Activated T-helper 1 cell treated with anti-CD3 and anti-CD28 coated beads, Interleukin-12 subunit alpha, Interleukin-12 subunit beta, Interleukin-2, Interleukin-4 antibody, amounts not matched to agents 30 ng/mL and 10 ng/mL and 1 ng/mL, durations not matched to agents 14 hours and 24 hours and 36 hours (primary cell): ENCODE measurements at regions of chr17 and their contacts with region 1.

Region 1: DNA sequence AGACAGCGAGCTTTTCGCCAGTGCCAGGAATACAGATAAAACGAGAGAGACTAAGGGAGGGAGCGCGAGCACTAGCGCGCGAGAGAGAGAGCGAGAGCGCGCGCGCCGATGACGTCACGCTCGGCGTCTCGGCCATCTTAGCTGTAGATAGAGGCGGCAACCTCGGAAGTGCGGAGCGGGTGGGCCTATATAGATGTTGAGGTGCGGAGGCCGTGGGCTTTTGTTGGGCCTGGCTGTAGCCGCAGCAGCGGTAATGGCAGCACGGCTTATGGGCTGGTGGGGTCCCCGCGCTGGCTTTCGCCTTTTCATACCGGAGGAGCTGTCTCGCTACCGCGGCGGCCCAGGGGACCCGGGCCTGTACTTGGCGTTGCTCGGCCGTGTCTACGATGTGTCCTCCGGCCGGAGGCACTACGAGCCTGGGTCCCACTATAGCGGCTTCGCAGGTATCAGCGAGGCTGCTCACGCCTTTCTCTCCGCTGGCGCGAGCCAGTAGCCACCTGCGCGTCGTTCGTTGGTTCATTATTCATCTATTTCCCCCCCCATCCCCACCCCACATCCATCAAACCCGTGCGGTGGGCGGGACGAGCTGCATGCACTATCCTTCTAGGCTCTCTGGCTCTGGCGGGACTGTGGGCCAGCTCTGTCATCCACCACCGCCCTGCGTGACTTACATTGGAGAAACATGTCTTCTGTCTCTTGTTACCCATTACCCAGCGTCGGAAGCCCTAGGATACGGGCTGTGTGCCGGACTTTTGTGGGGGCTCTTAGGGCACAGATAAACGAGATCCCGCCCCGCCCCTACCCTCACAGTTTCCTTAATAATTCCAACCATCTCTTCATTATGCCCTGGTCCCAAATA is 795 bp downstream of the CYB5D2 start:
- DNase-seq: peak; percentile 86
- H3K4me3 Mint-ChIP-seq: peak overlapping the region; percentile 98
- H3K27ac Mint-ChIP-seq: peak overlapping the region; percentile 99
- H3K4me1 Mint-ChIP-seq: peaks cover 39% of the 10 kb centered on the region
- H3K27me3 Mint-ChIP-seq: no peaks in the 10 kb centered on the region

Region 2: DNA sequence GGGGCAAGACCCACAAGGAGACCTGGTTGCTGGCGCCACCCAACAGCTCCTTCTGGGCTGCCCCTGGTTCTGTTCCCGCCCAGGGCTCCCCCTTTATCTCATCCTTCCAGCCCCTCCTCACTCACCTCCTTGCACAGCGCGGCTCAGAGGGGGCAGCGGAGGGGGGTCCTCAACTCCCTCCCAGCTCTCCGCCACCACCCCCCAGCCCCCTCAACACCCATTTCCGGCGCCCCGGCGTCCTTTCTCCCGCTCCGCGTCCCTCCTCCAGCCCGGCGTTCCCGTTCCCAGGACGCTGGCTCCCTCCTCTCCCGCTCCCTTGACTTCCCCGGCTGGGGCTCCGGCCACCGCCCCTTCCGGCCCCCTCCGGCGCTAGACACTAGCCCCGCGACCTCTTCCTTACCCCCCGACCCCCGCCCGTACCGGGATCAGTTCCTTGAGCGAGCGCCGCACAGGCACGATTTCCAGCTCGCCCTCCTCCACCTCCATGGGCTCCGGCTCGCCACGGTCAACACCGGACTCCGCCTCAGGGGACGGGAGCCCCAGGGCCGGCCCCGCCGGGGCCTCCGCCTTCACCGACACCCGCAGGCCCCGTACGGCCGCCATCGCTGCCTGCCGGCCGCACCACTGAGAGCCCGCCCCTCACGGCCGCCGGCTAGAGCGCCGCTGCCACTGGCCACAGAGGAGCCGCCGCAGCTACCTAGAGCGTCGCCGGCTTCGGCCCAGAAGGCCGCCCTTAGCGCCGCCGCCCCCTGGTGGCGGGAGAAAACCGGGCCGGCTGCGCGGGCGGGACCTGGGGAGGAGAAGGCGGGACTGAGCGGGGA is 298.0 kb before region 1 on chr17 and contains the start of gene NCBP3:
- intact Hi-C with region 1: loop called (anchors 1 kb)
- DNase-seq: peak; percentile 90
- H3K4me3 Mint-ChIP-seq: peak within 1 kb of the TSS; percentile 97
- H3K27ac Mint-ChIP-seq: peak within 1 kb of the TSS; percentile 97
- H3K4me1 Mint-ChIP-seq: peaks cover 16% of the 10 kb centered on the region
- H3K27me3 Mint-ChIP-seq: peaks cover 9% of the 10 kb centered on the region
- total RNA-seq, gene NCBP3: 54.2 and 56.0 TPM in 2 replicates

Region 3: DNA sequence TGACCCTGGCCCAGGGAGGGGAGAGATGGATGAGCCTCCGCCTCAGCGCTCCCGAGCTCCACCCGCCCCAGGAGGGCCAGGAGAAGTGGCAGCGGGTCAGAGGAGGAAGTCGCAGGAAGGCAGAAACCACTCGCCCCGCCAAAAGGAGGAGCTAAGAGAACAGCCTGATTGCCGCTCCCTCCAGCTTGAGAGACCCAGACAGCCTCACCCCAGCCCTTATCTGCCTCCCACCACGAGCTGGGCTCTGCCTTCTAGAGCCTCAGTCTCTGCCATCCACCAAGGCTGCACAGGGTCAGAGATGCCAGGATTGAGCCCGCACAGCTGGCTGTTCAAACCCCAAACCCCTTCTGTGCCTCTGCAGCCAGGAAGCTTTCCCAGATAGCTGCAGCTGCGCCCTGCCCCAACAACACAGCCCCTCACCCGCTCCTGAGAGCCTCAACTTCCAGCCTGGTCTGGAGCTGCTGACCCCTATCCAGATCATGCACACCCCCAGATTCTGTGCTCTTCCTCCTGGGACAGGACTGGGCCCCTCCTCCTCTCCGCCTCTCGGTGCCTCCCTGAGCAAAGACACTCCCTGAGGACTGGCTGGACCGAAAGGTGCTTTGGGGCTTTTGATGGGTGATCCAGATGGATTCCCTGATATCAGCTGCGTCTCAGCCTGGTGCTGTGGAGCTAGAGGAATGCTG is 178.5 kb before region 1 on chr17:
- intact Hi-C with region 1: loop called (anchors 2 kb)
- DNase-seq: peak; percentile 66
- H3K4me3 Mint-ChIP-seq: peak overlapping the region; percentile 88
- H3K27ac Mint-ChIP-seq: peak overlapping the region; percentile 90
- H3K4me1 Mint-ChIP-seq: peaks cover 38% of the 10 kb centered on the region
- H3K27me3 Mint-ChIP-seq: no peaks in the 10 kb centered on the region

Region 4: GRCh38 chr17:4130715-4131114 is 13.1 kb before region 1 on chr17:
- intact Hi-C with region 1: no loop called
- DNase-seq: no peak
- H3K4me3 Mint-ChIP-seq: no peak overlapping the region
- H3K27ac Mint-ChIP-seq: peak overlapping the region; percentile 40
- H3K4me1 Mint-ChIP-seq: peaks cover 19% of the 10 kb centered on the region
- H3K27me3 Mint-ChIP-seq: no peaks in the 10 kb centered on the region

Region 5: DNA sequence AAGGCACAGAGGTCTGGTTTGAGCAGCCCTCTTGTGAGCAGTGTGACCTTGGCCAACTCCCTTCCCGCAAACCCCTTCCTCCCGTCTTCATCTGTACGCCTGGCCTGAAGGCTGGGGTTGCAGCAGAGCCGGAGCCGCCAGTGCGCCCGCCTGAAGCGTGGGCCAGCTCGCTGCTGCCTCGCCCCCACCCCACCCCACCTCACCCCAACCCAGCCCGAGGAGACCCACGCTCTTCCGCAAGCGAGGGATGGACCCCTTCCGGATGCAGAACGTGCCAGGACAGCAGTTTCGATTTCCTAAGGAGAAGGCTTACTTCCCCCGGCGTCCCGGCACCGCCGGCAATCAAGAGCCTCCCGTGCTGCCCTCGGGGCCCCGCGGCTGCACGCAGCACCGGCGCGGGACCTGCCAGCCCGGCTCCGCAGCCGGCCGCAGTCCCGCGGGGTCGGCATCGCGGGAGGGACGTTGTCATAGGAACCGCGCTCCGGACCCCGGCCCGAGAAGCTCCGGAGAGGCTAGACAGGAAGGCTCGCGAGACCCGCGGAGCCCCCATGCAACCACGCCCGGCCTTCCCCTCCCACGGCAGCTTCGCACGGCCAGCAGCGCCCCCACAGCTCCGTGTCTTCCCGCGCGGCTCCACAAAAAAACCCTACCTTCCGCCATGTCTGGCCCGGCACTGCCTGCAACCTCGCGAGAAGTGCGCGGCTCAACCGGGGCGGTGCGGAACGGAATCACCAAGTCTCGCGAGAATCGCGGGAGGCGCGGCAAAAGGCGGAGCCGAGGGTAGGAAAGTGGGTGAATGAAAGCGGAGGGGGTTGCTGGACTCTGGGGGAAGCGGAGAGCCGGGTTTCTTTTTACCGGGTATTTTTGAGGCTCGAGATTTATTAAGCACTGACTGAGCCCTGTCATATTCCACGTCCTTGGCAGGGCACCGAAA is 119.8 kb after region 1 on chr17 and contains the start of gene ANKFY1:
- intact Hi-C with region 1: loop called (anchors 1 kb)
- DNase-seq: peak; percentile 98
- H3K4me3 Mint-ChIP-seq: peak within 1 kb of the TSS; percentile 98
- H3K27ac Mint-ChIP-seq: peak within 1 kb of the TSS; percentile 95
- H3K4me1 Mint-ChIP-seq: peaks cover 37% of the 10 kb centered on the region
- H3K27me3 Mint-ChIP-seq: no peaks in the 10 kb centered on the region
- total RNA-seq, gene ANKFY1: 53.8 and 60.1 TPM in 2 replicates

Region 6: DNA sequence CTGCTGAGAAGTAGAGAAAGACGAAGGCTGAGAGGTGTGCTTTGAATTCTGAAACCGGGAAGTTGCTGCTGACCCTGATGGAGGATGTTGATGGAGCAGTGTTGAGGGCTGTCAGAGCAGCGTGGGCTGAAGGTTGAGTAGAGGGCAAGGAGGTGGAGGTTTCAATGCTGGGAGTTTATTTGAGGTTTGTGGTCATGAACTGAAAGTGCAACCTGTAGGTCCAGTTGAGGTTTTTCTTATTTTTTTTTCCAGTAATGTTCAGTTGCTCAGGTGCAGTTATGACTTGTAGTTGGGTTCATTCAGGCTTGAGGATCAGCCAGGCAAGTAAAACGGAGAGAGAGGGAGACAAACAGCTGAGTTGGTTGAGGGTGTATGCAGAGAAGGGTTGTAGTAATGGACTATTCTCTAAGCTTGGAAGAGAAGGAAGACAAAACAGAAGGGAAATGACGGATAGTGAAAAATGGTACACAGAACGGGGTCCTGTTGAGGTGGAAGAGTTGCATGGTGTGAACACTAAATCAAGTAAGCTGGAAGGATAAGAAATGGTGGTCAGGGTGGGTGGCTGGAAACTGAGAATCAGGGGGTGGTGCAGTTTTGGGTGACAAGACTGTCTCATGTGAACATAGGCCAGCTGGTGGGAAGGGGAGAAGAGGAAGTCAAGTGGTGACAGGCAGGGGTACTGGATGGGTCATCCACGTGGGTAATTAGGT is 231.4 kb after region 1 on chr17:
- intact Hi-C with region 1: loop called (anchors 1 kb)
- DNase-seq: peak; percentile 60
- H3K4me3 Mint-ChIP-seq: peak overlapping the region; percentile 60
- H3K27ac Mint-ChIP-seq: peak overlapping the region; percentile 89
- H3K4me1 Mint-ChIP-seq: peaks cover 32% of the 10 kb centered on the region
- H3K27me3 Mint-ChIP-seq: no peaks in the 10 kb centered on the region

Region 7: DNA sequence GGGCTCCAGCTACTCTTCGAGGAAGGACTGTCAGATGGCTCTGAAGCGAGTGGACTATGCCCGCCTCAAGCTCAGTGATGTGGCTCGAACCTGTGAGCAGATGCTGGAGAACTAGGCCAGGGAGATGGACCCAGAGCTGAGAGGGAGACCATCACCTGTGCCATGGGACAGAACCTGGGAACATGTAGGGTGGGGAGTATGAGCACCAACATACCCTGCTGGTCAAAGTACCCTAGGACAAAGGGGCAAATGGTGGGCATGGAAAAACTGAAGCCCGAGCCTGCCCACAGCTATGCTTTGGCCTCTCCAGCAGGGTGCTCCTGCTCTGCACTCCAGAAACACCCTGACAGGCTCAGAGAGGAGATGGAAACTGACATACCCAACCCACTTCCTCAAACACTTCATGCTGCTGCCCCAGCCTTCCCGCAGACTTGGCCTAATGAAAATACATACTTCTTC is 589.3 kb after region 1 on chr17:
- intact Hi-C with region 1: loop called (anchors 5 kb)
- DNase-seq: no peak
- H3K4me3 Mint-ChIP-seq: peak overlapping the region; percentile 38
- H3K27ac Mint-ChIP-seq: peak overlapping the region; percentile 65
- H3K4me1 Mint-ChIP-seq: peaks cover 57% of the 10 kb centered on the region
- H3K27me3 Mint-ChIP-seq: peaks cover 2% of the 10 kb centered on the region

Region 8: DNA sequence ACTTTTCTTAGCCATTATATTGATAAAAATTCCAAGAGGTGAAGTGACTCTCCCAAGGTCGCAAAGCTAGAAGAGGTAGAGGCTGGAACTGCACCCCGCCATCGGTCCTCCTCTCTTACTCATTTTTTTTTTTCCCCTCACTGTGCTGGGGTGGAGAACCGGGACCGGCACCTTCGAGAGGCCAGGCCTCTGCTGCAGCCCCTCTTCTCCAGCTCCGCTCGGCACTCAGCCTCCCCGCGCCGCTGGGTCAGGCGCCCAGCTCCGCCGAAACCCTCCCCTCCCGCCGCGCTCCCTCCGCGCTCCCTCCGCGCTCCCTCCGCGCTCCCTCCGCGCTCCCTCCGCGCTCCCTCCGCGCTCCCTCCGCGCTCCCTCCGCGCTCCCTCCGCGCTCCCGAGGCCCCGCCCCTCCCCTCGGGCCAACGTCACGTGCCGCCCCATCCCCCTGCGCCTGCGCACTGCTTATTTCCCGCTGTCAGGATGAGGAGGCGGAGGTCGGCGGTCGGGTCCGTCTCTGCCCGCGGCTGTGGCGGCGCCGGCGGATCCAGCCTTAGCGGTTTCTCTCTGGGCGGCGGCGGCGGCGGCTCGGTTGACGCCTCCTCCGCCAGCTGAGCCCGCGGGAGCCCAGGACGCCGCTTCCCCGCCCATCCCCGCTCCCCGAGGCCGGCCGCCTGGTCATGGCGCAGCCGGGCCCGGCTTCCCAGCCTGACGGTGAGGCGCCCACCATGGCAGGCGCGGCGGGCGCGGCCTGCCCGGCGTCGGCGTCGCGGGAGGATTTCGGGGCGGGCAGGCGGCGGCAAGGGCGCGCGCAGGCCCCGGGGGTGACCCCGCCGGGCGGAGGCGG is 1138.2 kb after region 1 on chr17 and contains the start of gene RABEP1:
- intact Hi-C with region 1: loop called (anchors 2 kb)
- DNase-seq: peak; percentile 92
- H3K4me3 Mint-ChIP-seq: peak within 1 kb of the TSS; percentile 90
- H3K27ac Mint-ChIP-seq: peak within 1 kb of the TSS; percentile 91
- H3K4me1 Mint-ChIP-seq: peaks cover 28% of the 10 kb centered on the region
- H3K27me3 Mint-ChIP-seq: peaks cover 3% of the 10 kb centered on the region
- total RNA-seq, gene RABEP1: 50.2 and 51.4 TPM in 2 replicates